A673 (cell line): ENCODE measurements at regions of chr10 and their contacts with region 1.

Region 1: GRCh38 chr10:6667679-6668270 is 87.7 kb upstream of the PRKCQ start:
- DNase-seq: peak; percentile 61
- H3K4me3 ChIP-seq: no peak overlapping the region
- H3K27ac ChIP-seq: no peak overlapping the region
- H3K4me1 ChIP-seq: no peaks in the 10 kb centered on the region
- H3K27me3 ChIP-seq: peaks cover 30% of the 10 kb centered on the region
- CTCF ChIP-seq: peak; percentile 77

Region 2: DNA sequence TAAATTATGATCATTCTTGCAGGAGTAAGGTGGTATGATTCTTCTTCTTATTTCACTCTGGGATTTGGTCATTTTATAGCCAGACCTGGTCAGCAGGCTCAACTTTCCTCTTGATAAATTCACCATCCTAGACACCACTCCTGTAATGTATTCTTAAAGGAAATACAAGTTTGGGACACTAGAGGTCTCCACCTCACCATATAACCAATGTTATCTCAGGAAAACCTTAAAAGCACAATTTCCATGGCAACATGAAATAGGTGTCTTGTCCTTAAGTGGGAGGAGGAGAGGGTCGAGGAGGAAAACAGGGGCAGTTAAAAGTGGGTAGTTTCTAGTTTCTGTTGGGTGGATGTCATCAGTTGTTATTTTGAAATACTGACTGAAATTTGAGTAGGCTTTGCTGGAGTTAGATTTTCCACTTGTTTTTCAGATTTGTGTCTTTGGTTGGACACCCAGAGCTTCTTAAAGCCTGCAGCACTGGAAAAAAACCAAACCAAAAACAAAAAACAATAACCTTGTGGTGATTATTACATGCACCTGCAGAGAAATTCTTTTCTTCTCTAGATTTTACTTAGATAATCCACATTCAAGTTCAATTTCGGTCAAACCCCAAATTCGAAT is 250.8 kb before region 1 on chr10:
- CTCF ChIA-PET with region 1: no interaction called
- POLR2A ChIA-PET with region 1: no interaction called
- intact Hi-C with region 1: loop called (anchors 1 kb)
- DNase-seq: peak; percentile 70
- H3K4me3 ChIP-seq: no peak overlapping the region
- H3K27ac ChIP-seq: no peak overlapping the region
- H3K4me1 ChIP-seq: no peaks in the 10 kb centered on the region
- H3K27me3 ChIP-seq: peaks cover 60% of the 10 kb centered on the region
- CTCF ChIP-seq: peak; percentile 73

Region 3: GRCh38 chr10:6445501-6446316 is 222.1 kb before region 1 on chr10:
- CTCF ChIA-PET with region 1: no interaction called
- POLR2A ChIA-PET with region 1: no interaction called
- intact Hi-C with region 1: loop called (anchors 2 kb)
- DNase-seq: peak; percentile 44
- H3K4me3 ChIP-seq: no peak overlapping the region
- H3K27ac ChIP-seq: no peak overlapping the region
- H3K4me1 ChIP-seq: no peaks in the 10 kb centered on the region
- H3K27me3 ChIP-seq: peaks cover 47% of the 10 kb centered on the region
- CTCF ChIP-seq: peak; percentile 80

Region 4: GRCh38 chr10:6580279-6581029 is 87.3 kb before region 1 on chr10:
- CTCF ChIA-PET with region 1: no interaction called
- POLR2A ChIA-PET with region 1: no interaction called
- intact Hi-C with region 1: loop called (anchors 5 kb)
- DNase-seq: peak; percentile 49
- H3K4me3 ChIP-seq: peak overlapping the region; percentile 47
- H3K27ac ChIP-seq: no peak overlapping the region
- H3K4me1 ChIP-seq: peaks cover 5% of the 10 kb centered on the region
- H3K27me3 ChIP-seq: peaks cover 97% of the 10 kb centered on the region
- CTCF ChIP-seq: peak; percentile 34; the same call in 1 of the 2 replicates

Region 5: GRCh38 chr10:6936931-6937330 is 269.2 kb after region 1 on chr10:
- CTCF ChIA-PET with region 1: no interaction called
- POLR2A ChIA-PET with region 1: no interaction called
- intact Hi-C with region 1: no loop called
- DNase-seq: no peak
- H3K4me3 ChIP-seq: no peak overlapping the region
- H3K27ac ChIP-seq: no peak overlapping the region
- H3K4me1 ChIP-seq: no peaks in the 10 kb centered on the region
- H3K27me3 ChIP-seq: peaks cover 50% of the 10 kb centered on the region
- CTCF ChIP-seq: no peak

Region 6: DNA sequence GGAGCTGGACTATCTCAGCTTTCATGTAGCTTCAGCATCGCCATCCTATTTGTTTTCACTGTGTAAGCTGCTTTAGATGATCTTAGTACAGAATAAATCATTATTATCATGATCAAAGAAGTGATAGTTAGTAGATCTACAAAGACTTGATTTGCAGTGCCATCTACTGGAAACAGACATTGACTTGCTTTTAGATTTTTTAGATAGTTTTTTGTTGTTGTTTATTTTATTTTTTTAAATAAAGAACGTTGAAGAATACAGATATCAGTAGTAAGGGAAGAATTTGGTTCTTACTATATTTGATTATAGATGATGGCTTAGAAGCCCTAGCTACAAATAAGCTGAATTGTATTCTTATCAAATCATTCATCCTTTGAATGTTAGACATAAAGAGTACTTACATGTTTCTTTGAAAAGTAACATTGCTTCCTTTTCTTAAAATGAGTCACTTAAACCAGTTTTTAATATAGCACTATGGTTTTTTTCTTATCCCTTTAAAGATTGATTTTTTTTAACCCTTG is 749.4 kb after region 1 on chr10:
- CTCF ChIA-PET with region 1: no interaction called
- POLR2A ChIA-PET with region 1: no interaction called
- intact Hi-C with region 1: loop called (anchors 2 kb)
- DNase-seq: peak; percentile 55
- H3K4me3 ChIP-seq: no peak overlapping the region
- H3K27ac ChIP-seq: no peak overlapping the region
- H3K4me1 ChIP-seq: no peaks in the 10 kb centered on the region
- H3K27me3 ChIP-seq: peaks cover 36% of the 10 kb centered on the region
- CTCF ChIP-seq: peak; percentile 68